ENCODE measurements at regions of chr12 and their contacts with region 1.

Region 1: DNA sequence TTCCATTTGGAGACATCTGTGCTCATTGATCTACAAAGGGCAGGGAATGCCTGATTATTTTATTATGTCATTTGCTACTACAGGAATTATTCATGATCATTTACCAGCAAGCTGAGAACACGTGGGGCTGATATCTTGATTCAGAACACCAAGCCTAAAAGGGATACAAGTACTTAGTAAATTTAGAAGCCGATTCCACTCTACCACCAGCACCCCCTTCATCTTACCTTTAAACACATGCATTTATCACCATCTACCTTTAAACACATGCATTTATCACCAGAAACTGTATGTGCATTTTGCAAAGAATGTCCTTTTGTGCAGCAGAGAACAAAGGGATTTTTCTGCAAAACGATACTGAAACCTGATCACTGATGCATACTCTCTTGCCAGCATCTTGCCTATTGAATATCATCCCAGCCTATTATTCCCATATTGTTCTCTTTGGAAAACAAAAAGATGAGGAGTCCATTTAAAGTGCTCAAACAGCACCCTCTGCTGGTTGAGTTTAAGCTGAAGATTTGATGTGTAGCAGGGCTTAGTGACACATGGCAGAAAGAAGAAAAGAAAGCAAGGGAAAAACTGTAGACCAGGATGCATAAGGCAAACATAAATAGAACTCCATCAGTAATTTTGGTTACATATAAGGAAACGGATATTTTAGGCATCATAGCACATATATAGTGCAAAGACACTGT is 132.6 kb upstream of the PLEKHG7 start:
- DNase-seq: peak in 7 of 9 donors; percentile 67 to 86 (median 80)
- ATAC-seq: peak; percentile 92
- H3K4me3 ChIP-seq: no peak overlapping the region
- H3K4me3 Mint-ChIP-seq: no peak overlapping the region
- H3K27ac ChIP-seq: peak overlapping the region; percentile 52
- H3K27ac Mint-ChIP-seq: no peak overlapping the region
- H3K4me1 ChIP-seq: peaks cover 11 to 13% of the 10 kb centered on the region in 2 donors
- H3K4me1 Mint-ChIP-seq: peaks cover 0 to 37% (median 6%) of the 10 kb centered on the region in 7 donors
- H3K27me3 ChIP-seq: no peaks in the 10 kb centered on the region
- H3K27me3 Mint-ChIP-seq: no peaks in the 10 kb centered on the region

Region 2: DNA sequence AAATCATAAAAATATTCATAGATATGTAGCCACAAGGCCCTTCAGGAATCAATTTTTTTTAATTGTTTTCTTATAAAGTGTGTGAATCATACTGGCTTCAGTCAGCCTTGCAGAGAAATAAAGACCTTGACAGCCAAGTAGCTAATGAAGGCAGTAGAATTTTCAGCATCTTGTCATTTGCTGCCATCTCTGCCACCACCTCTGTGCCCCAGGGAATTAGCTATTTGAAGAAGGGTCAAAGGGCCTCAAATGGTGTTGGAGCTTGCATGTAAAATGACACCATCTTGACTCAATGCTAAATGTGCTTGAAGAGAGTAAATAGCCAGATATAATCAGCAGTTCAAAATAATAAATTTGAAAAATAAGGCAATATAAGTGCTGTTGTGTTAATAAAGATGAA is 1028.1 kb before region 1 on chr12:
- CTCF ChIA-PET with region 1: interaction called, 3 read pairs
- POLR2A ChIA-PET with region 1: no interaction called
- intact Hi-C with region 1: loop called in 1 of 2 experiments (anchors 1 kb)
- DNase-seq: no peak
- ATAC-seq: no peak
- H3K4me3 ChIP-seq: no peak overlapping the region
- H3K4me3 Mint-ChIP-seq: no peak overlapping the region
- H3K27ac ChIP-seq: no peak overlapping the region
- H3K27ac Mint-ChIP-seq: no peak overlapping the region
- H3K4me1 ChIP-seq: no peaks in the 10 kb centered on the region
- H3K4me1 Mint-ChIP-seq: peaks cover 0 to 11% (median 6%) of the 10 kb centered on the region in 7 donors
- H3K27me3 ChIP-seq: no peaks in the 10 kb centered on the region
- H3K27me3 Mint-ChIP-seq: peaks cover 0 to 7% (median 0%) of the 10 kb centered on the region in 5 donors

Region 3: GRCh38 chr12:91991399-91992187 is 578.6 kb before region 1 on chr12:
- CTCF ChIA-PET with region 1: no interaction called
- POLR2A ChIA-PET with region 1: interaction called, 4 read pairs
- intact Hi-C with region 1: loop called (anchors 1 kb)
- DNase-seq: peak in 5 of 9 donors; percentile 22 to 64 (median 48)
- ATAC-seq: peak; percentile 83
- H3K4me3 ChIP-seq: no peak overlapping the region
- H3K4me3 Mint-ChIP-seq: peak overlapping the region in 5 of 10 donors; percentile 18 to 50 (median 32)
- H3K27ac ChIP-seq: peak overlapping the region; percentile 26
- H3K27ac Mint-ChIP-seq: peak overlapping the region in 7 of 9 donors; percentile 8 to 92 (median 70)
- H3K4me1 ChIP-seq: peaks cover 9 to 27% of the 10 kb centered on the region in 2 donors
- H3K4me1 Mint-ChIP-seq: peaks cover 9 to 92% (median 79%) of the 10 kb centered on the region in 7 donors
- H3K27me3 ChIP-seq: no peaks in the 10 kb centered on the region
- H3K27me3 Mint-ChIP-seq: no peaks in the 10 kb centered on the region

Region 4: GRCh38 chr12:92297932-92298696 is 272.1 kb before region 1 on chr12:
- CTCF ChIA-PET with region 1: no interaction called
- POLR2A ChIA-PET with region 1: no interaction called
- intact Hi-C with region 1: loop called in 1 of 2 experiments (anchors 5 kb)
- DNase-seq: peak in 7 of 9 donors; percentile 29 to 75 (median 58)
- ATAC-seq: peak; percentile 83
- H3K4me3 ChIP-seq: no peak overlapping the region
- H3K4me3 Mint-ChIP-seq: peak overlapping the region in 9 of 10 donors; percentile 9 to 80 (median 63)
- H3K27ac ChIP-seq: peak overlapping the region; percentile 57
- H3K27ac Mint-ChIP-seq: peak overlapping the region in 2 of 9 donors; percentile 85 to 96
- H3K4me1 ChIP-seq: peaks cover 17 to 42% of the 10 kb centered on the region in 2 donors
- H3K4me1 Mint-ChIP-seq: peaks cover 8 to 33% (median 27%) of the 10 kb centered on the region in 7 donors
- H3K27me3 ChIP-seq: no peaks in the 10 kb centered on the region
- H3K27me3 Mint-ChIP-seq: no peaks in the 10 kb centered on the region

Region 5: DNA sequence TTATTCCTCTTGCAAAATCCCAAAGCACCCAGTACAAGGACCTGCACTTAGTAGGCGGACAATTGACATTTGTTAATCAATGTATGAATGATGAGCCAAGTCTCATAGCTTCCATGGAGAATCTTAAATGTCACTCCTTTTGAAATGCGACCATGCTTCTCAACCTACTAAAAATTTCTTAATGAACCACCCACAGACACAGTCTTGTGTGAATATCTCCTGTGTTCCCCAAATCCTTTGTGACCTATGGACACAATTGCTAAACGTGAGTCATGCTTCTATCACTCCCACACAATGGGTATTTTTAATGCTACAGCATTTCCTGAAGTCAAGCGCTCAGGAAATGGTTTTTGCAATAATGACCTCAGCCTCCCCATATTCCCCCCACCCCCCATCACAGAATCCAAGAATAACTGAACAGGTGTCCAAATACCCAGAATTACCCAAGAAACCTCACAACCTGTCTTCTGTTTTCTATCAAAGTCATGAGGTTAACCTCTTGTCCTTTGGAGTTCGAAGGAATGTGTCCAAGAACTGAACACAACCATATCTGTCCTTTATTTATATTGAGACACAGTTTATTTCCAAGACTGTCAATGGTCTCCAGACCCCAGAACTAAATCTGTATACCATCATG is 31.0 kb before region 1 on chr12:
- CTCF ChIA-PET with region 1: no interaction called
- POLR2A ChIA-PET with region 1: no interaction called
- intact Hi-C with region 1: no loop called
- DNase-seq: no peak
- ATAC-seq: peak; percentile 77
- H3K4me3 ChIP-seq: no peak overlapping the region
- H3K4me3 Mint-ChIP-seq: peak overlapping the region in 5 of 10 donors; percentile 14 to 69 (median 22)
- H3K27ac ChIP-seq: no peak overlapping the region
- H3K27ac Mint-ChIP-seq: peak overlapping the region in 6 of 9 donors; percentile 0 to 90 (median 68)
- H3K4me1 ChIP-seq: peaks cover 23 to 44% of the 10 kb centered on the region in 2 donors
- H3K4me1 Mint-ChIP-seq: peaks cover 21 to 67% (median 47%) of the 10 kb centered on the region in 7 donors
- H3K27me3 ChIP-seq: no peaks in the 10 kb centered on the region
- H3K27me3 Mint-ChIP-seq: no peaks in the 10 kb centered on the region

Region 6: GRCh38 chr12:92593734-92594402 is 23.7 kb after region 1 on chr12:
- CTCF ChIA-PET with region 1: interaction called, 6 read pairs
- POLR2A ChIA-PET with region 1: interaction called, 4 read pairs
- intact Hi-C with region 1: loop called (anchors 1 to 2 kb)
- DNase-seq: peak; percentile 51 to 97 (median 92)
- ATAC-seq: peak; percentile 95
- H3K4me3 ChIP-seq: peak overlapping the region; percentile 16
- H3K4me3 Mint-ChIP-seq: peak overlapping the region; percentile 22 to 83 (median 72)
- H3K27ac ChIP-seq: peak overlapping the region; percentile 86
- H3K27ac Mint-ChIP-seq: peak overlapping the region; percentile 90 to 100 (median 98)
- H3K4me1 ChIP-seq: peaks cover 27 to 30% of the 10 kb centered on the region in 2 donors
- H3K4me1 Mint-ChIP-seq: peaks cover 23 to 74% (median 44%) of the 10 kb centered on the region in 7 donors
- H3K27me3 ChIP-seq: no peaks in the 10 kb centered on the region
- H3K27me3 Mint-ChIP-seq: no peaks in the 10 kb centered on the region